Activated CD8-positive, alpha-beta T cell treated with anti-CD3 and anti-CD28 coated beads for 36 hours (primary cell): ENCODE measurements at regions of chr15 and their contacts with region 1.

Region 1: DNA sequence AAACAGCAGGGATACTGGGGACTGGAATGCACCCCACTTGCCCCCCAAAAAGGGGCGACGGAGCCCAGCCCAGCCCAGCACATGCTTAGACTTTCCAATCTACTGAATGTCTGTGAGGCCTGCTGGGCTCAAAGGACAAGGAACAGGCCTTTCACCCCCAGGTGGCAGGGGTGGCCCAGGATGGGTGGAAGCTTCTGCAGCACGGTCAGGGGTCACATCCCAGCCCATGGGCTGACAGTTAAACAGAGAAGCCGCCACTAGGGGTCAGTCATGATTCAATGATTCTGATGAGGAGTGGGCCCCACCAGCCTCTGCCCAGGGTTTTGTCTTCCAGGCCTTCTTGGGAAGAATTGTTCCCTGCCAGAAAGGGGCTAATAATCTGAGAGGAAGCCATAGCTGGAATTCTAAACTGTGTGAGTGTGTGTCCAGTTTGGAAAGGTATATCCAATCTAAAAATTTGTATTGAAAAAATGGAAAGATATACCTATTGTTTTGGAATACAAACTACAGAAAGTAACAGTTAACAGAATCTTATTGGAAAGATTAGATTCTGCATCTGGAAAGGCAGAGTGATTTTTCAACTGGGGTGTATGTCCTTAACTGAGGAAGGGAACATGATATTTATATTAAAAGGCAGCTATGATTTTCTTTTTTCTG is 2.2 kb downstream of the CHRNB4 start:
- DNase-seq: peak; percentile 76
- ATAC-seq: peak; percentile 66
- H3K4me3 Mint-ChIP-seq: no peak overlapping the region
- H3K27ac Mint-ChIP-seq: no peak overlapping the region
- H3K4me1 Mint-ChIP-seq: peaks cover 9% of the 10 kb centered on the region
- H3K27me3 Mint-ChIP-seq: no peaks in the 10 kb centered on the region
- CTCF ChIP-seq: peak; percentile 72

Region 2: DNA sequence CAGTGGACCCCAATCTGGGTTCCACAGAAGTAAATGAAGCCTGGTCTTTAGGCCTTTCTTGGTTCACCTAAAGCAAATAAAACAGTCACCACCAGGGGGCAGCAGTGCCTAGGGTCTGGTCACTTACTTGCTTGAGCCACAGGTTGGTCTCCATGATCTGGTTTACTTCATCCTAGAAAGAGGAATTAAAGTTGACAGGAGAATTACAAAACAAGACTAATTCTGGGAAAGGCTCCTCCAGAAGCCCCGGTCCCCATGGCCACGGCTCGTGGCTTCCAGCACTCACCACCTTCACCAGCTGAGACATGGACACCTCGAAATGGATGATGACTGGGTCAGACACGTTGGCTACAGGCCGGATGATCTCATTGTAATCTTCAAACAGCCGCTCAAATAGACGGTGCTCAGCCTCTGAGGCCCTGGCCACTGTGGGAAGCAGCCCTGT is 20.3 kb before region 1 on chr15:
- CTCF ChIA-PET with region 1: interaction called, 10 read pairs
- POLR2A ChIA-PET with region 1: no interaction called
- intact Hi-C with region 1: no loop called
- DNase-seq: peak; percentile 93
- ATAC-seq: peak; percentile 64
- H3K4me3 Mint-ChIP-seq: no peak overlapping the region
- H3K27ac Mint-ChIP-seq: no peak overlapping the region
- H3K4me1 Mint-ChIP-seq: peaks cover 4% of the 10 kb centered on the region
- H3K27me3 Mint-ChIP-seq: peaks cover 37% of the 10 kb centered on the region
- CTCF ChIP-seq: peak; percentile 71

Region 3: GRCh38 chr15:78654272-78654671 is 15.5 kb after region 1 on chr15:
- CTCF ChIA-PET with region 1: interaction called, 25 read pairs
- POLR2A ChIA-PET with region 1: interaction called, 3 read pairs
- intact Hi-C with region 1: no loop called
- DNase-seq: no peak
- ATAC-seq: no peak
- H3K4me3 Mint-ChIP-seq: no peak overlapping the region
- H3K27ac Mint-ChIP-seq: no peak overlapping the region
- H3K4me1 Mint-ChIP-seq: no peaks in the 10 kb centered on the region
- H3K27me3 Mint-ChIP-seq: no peaks in the 10 kb centered on the region
- CTCF ChIP-seq: no peak

Region 4: GRCh38 chr15:78685159-78685921 is 46.6 kb after region 1 on chr15:
- CTCF ChIA-PET with region 1: interaction called, 13 read pairs
- POLR2A ChIA-PET with region 1: no interaction called
- intact Hi-C with region 1: no loop called
- DNase-seq: no peak
- ATAC-seq: no peak
- H3K4me3 Mint-ChIP-seq: no peak overlapping the region
- H3K27ac Mint-ChIP-seq: no peak overlapping the region
- H3K4me1 Mint-ChIP-seq: no peaks in the 10 kb centered on the region
- H3K27me3 Mint-ChIP-seq: no peaks in the 10 kb centered on the region
- CTCF ChIP-seq: no peak

Region 5: DNA sequence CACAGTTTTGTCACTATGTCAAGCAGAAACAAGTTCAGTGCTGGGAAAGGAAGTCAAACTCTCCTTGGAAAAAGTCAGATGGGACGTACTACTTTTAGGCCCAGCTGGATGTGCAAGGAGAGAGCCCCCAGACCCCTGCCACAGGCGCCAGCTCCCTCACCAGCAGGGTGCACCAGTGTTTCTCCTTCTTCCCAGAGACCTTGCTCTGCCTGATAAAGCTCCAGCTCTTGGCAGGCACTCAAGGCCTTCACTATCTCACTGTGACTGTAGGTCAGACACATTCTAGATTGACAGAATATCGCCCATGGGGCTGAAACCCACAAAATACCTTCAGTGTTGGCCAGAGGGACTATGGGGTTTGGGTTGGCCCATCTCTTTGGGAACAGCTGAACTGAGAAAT is 57.1 kb after region 1 on chr15:
- CTCF ChIA-PET with region 1: interaction called, 13 read pairs
- POLR2A ChIA-PET with region 1: no interaction called
- intact Hi-C with region 1: no loop called
- DNase-seq: no peak
- ATAC-seq: no peak
- H3K4me3 Mint-ChIP-seq: no peak overlapping the region
- H3K27ac Mint-ChIP-seq: no peak overlapping the region
- H3K4me1 Mint-ChIP-seq: no peaks in the 10 kb centered on the region
- H3K27me3 Mint-ChIP-seq: peaks cover 2% of the 10 kb centered on the region
- CTCF ChIP-seq: no peak